ENCODE measurements at regions of chr4 and their contacts with region 1.

Region 1: DNA sequence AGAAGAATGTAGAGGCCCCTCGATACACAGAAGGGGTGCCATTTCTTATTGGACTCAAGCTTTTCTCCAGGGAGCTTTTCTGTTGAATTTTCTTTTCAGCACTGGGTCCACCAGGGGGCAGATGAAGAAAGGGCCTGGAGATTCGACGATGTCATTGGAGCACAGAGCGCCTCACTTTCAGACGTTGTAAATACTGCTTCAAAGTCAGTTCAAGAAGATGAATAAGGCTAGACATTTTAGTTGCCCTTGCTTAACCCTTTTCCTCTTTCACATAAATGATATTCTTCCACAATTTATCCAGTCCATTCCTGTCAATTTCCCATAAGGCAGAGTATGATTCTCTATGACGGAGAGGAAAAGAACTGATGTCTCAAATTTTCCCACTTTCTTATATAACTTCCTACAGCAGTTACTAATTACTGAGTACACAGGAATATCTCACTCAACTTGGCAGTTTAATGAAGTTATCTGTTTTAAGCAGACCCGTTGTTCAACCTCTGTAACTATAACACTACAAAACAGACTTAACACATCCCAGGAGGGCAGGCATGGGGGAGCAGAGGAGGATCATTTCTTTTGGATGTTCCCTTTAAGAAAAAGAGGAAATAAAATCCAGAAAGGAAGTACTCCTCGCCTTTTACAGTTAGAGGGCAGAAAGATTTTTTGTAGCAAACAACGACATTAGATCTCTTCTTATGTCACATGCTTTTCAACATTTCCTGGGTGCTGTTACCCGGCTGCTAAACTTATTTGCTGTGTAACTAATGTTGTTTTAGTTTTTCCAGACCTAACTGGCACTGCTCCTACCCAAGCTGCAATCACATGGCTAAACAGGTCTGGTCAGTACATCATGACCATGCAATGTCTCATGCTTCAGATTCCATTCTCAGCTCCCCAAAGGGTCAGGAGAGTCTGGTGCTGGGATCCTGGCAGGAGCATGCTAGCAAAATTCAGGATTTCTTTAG is 12.2 kb upstream of the CENPU start:
- DNase-seq: peak; percentile 85 to 88
- H3K4me3 ChIP-seq: no peak overlapping the region
- H3K27ac ChIP-seq: peak overlapping the region; percentile 96 to 99 (median 98)
- H3K4me1 ChIP-seq: peaks cover 38 to 55% of the 10 kb centered on the region in 2 donors
- H3K27me3 ChIP-seq: no peaks in the 10 kb centered on the region
- CTCF ChIP-seq: peak; percentile 73 to 91 (median 82)
- POLR2A ChIP-seq: peak in 1 of 2 donors; percentile 68

Region 2: DNA sequence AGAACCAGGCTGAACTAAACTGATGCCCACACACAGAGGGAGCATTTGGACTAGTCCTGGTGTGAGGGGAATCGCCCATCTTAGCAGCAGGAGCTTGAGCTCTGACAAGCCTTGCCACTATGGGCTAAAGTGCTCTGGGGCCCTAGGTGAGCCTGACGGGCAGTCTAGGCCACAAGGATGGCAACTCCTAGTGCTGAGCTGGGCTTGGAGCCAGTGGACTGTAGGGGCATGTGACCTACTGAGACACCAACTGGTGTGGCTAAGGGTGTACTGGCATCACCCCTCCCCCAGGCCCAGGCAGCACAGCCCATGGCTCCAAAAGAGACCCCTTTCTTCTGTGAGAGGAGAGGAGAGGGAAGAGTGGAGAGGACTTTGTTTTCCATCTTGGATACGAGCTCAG is 26.7 kb before region 1 on chr4:
- intact Hi-C with region 1: no loop called
- DNase-seq: no peak
- H3K4me3 ChIP-seq: no peak overlapping the region
- H3K27ac ChIP-seq: no peak overlapping the region
- H3K4me1 ChIP-seq: no peaks in the 10 kb centered on the region
- H3K27me3 ChIP-seq: no peaks in the 10 kb centered on the region
- CTCF ChIP-seq: no peak
- POLR2A ChIP-seq: no peak

Region 3: GRCh38 chr4:184824081-184824775 is 78.1 kb after region 1 on chr4:
- intact Hi-C with region 1: loop called (anchors 5 kb)
- DNase-seq: peak in 1 of 2 donors; percentile 15
- H3K4me3 ChIP-seq: peak overlapping the region in 1 of 3 donors; percentile 68
- H3K27ac ChIP-seq: peak overlapping the region; percentile 50 to 92 (median 71)
- H3K4me1 ChIP-seq: peaks cover 25 to 53% of the 10 kb centered on the region in 2 donors
- H3K27me3 ChIP-seq: no peaks in the 10 kb centered on the region
- CTCF ChIP-seq: no peak
- POLR2A ChIP-seq: no peak

Region 4: GRCh38 chr4:184983672-184984356 is 237.7 kb after region 1 on chr4:
- intact Hi-C with region 1: loop called (anchors 10 kb)
- DNase-seq: peak; percentile 72 to 74
- H3K4me3 ChIP-seq: no peak overlapping the region
- H3K27ac ChIP-seq: no peak overlapping the region
- H3K4me1 ChIP-seq: peaks cover 0 to 8% of the 10 kb centered on the region in 2 donors
- H3K27me3 ChIP-seq: no peaks in the 10 kb centered on the region
- CTCF ChIP-seq: peak in 4 of 6 experiments; percentile 28 to 52 (median 44)
- POLR2A ChIP-seq: no peak

Region 5: DNA sequence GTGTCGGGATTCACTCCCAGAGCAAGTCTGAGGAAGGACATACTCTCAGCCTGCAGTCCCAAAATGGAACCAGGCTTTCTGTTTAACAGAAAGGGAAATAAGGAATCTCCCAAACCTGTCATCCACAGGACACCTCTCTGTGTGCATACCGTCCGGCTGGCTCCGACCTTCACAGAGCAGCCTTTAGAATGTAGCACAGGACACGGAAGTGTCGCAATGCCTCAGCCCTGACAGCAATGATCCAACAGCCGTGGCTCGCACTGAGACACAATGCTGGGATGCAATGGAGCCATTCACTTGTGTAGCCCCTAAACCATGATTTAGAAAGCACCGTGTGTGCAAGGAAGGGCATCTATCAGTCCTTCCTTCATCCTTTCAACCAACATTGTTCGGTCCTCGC is 256.7 kb after region 1 on chr4:
- intact Hi-C with region 1: no loop called
- DNase-seq: no peak
- H3K4me3 ChIP-seq: no peak overlapping the region
- H3K27ac ChIP-seq: no peak overlapping the region
- H3K4me1 ChIP-seq: peaks cover 7 to 10% of the 10 kb centered on the region in 2 donors
- H3K27me3 ChIP-seq: no peaks in the 10 kb centered on the region
- CTCF ChIP-seq: no peak
- POLR2A ChIP-seq: no peak

Measured in thyroid gland (tissue), 4 donors.